HepG2 (cell line): ENCODE measurements at regions of chr4 and their contacts with region 1.

Region 1: DNA sequence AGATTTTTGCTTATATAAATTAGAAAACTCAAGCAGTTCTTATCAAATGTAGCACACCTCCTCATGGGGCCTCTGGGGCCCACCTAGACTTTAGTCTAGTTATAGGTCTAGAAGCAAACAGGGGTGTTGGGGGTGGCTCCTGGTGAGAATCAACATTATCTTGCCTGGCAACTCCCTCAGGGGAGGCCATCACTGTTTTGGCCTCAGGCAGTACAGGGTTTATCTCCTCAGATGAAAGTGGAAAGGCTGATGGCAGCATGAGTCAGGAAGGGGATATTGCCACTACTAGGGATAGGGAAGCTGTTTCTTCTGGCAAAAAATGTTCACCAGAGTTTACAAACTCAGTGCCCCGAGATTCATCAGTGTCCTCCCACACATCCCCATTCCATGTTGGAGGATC is 232.4 kb upstream of the BMP3 start:
- DNase-seq: no peak
- ATAC-seq: no peak
- H3K4me3 ChIP-seq: no peak overlapping the region
- H3K27ac ChIP-seq: no peak overlapping the region
- H3K4me1 ChIP-seq: no peaks in the 10 kb centered on the region
- H3K27me3 ChIP-seq: no peaks in the 10 kb centered on the region; a peak in 1 of 5 replicates
- CTCF ChIP-seq: no peak
- EP300 ChIP-seq: no peak
- POLR2A ChIP-seq: no peak
- RAD21 ChIP-seq: no peak

Region 2: DNA sequence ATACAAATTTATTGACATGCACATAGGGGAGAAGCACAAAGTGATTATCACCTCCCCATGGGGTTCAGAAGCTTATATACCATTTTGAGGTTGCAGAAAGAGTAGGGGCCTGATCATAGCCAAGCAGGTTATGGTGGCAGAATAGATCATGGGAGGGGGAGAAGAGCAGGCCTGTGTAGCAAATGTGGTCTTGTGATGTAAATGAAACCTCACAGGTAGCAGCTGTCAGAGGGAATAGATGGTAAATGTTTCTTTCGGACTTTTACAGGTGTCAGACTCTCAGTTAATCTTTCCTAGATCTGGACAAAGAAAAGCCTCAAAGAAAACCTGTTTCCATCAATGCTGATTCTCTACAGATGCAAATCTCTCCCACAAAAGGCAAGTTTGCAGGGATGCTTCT is 378.1 kb before region 1 on chr4:
- CTCF ChIA-PET with region 1: no interaction called
- POLR2A ChIA-PET with region 1: no interaction called
- in situ Hi-C with region 1: no loop called
- intact Hi-C with region 1: loop called (anchors 10 kb)
- DNase-seq: no peak
- ATAC-seq: no peak
- H3K4me3 ChIP-seq: no peak overlapping the region
- H3K27ac ChIP-seq: no peak overlapping the region
- H3K4me1 ChIP-seq: no peaks in the 10 kb centered on the region
- H3K27me3 ChIP-seq: no peaks in the 10 kb centered on the region
- CTCF ChIP-seq: no peak
- EP300 ChIP-seq: no peak
- POLR2A ChIP-seq: no peak
- RAD21 ChIP-seq: no peak